ENCODE measurements at regions of chr5 and their contacts with region 1.

Region 1: GRCh38 chr5:98349251-98349995 is 424.0 kb upstream of the RGMB start:
- DNase-seq: peak in 1 of 2 experiments; percentile 20
- H3K4me3 ChIP-seq: no peak overlapping the region
- H3K27ac ChIP-seq: no peak overlapping the region
- H3K4me1 ChIP-seq: no peaks in the 10 kb centered on the region
- H3K27me3 ChIP-seq: no peaks in the 10 kb centered on the region
- CTCF ChIP-seq: peak; percentile 90

Region 2: DNA sequence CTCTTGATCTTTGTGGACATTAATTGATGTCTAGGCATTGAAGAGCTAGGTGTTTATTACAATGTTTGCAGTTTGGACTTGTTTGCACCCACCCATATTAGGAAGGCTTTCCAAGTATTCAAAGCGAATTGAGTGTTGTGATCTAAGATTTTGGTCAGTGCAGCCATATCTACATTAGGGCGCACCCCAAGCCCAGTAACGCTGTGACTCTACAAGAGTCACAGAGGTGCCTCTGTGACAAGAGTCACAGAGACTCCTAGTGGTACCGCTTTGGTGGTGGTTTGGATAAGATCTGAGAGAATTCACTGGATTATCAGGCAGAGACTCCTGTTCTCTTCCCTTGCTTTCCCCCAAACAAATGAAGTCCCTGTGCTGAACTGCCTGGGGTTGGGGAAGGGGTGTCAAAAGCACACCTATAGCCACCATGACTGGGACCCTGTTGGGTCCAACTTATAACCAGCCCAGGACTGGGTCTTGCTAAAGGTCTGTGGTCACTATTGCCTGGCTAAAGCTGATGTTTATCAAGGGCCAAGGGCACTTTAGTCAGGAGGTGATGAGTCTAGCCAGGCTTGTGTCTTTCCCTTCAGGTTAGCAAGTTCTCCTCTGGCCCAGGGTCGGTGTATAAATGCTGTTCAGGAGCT is 1052.2 kb before region 1 on chr5:
- CTCF ChIA-PET with region 1: no interaction called
- POLR2A ChIA-PET with region 1: no interaction called
- intact Hi-C with region 1: loop called (anchors 1 kb)
- DNase-seq: peak; percentile 39 to 51
- H3K4me3 ChIP-seq: no peak overlapping the region
- H3K27ac ChIP-seq: no peak overlapping the region
- H3K4me1 ChIP-seq: no peaks in the 10 kb centered on the region
- H3K27me3 ChIP-seq: no peaks in the 10 kb centered on the region
- CTCF ChIP-seq: peak; percentile 70

Region 3: DNA sequence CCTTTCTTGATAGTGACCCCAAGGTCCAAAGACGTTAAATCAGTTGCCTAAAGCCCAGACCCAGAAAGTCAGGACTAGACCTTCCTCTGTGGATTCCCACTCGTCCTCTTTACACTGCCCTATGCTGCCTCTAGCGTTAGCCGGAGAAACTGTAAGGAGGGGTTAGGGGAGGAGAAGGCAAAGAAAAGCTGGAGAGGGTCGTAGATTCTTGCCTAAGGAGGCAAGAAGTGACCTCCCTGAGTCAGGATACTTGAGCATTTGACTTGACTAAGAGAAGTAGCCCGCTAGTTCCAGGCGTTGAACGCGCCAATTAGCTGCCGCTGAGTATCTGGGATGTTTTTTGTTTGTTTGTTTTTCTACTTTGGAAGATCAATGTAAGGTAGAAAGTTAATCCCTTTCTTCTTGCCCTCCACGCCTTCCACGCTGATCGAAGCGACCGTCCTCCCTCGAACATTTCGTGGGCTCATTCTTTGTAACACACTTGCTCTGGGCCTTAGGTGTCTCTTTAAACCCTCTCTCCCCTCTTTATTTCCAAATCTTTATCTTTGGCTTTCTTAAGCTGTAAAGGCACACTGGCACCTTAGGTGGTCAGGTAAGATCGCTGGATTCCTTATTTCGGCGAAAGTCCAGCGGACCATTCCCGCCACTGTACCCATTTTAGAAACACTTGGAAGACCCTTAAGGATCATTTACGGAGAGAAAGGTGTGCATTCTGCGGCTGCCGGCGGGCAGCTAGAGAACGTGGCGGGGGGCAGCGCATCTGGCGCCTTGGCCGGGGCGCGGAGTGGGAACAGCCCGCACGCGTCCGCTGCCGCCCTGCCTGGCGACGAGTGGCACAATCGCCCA is 419.0 kb after region 1 on chr5:
- CTCF ChIA-PET with region 1: interaction called, 3 read pairs
- POLR2A ChIA-PET with region 1: no interaction called
- intact Hi-C with region 1: loop called (anchors 2 kb)
- DNase-seq: peak in 1 of 2 experiments; percentile 50
- H3K4me3 ChIP-seq: peak overlapping the region; percentile 66
- H3K27ac ChIP-seq: no peak overlapping the region
- H3K4me1 ChIP-seq: peaks cover 13% of the 10 kb centered on the region
- H3K27me3 ChIP-seq: no peaks in the 10 kb centered on the region
- CTCF ChIP-seq: peak; percentile 86

Measured in PC-9 (cell line).